HCT116 (cell line): ENCODE measurements at regions of chr2 and their contacts with region 1.

Region 1: GRCh38 chr2:84526562-84526961 is 10.3 kb downstream of the DNAH6 start:
- DNase-seq: no peak
- ATAC-seq: peak; percentile 20; the same call in 1 of the 2 replicates
- H3K4me3 ChIP-seq: no peak overlapping the region
- H3K27ac ChIP-seq: no peak overlapping the region
- H3K4me1 ChIP-seq: no peaks in the 10 kb centered on the region
- H3K27me3 ChIP-seq: no peaks in the 10 kb centered on the region
- CTCF ChIP-seq: peak; percentile 17 to 68 (median 48); a peak in 5 of 6 replicates
- POLR2A ChIP-seq: no peak
- RAD21 ChIP-seq: peak; percentile 66

Region 2: DNA sequence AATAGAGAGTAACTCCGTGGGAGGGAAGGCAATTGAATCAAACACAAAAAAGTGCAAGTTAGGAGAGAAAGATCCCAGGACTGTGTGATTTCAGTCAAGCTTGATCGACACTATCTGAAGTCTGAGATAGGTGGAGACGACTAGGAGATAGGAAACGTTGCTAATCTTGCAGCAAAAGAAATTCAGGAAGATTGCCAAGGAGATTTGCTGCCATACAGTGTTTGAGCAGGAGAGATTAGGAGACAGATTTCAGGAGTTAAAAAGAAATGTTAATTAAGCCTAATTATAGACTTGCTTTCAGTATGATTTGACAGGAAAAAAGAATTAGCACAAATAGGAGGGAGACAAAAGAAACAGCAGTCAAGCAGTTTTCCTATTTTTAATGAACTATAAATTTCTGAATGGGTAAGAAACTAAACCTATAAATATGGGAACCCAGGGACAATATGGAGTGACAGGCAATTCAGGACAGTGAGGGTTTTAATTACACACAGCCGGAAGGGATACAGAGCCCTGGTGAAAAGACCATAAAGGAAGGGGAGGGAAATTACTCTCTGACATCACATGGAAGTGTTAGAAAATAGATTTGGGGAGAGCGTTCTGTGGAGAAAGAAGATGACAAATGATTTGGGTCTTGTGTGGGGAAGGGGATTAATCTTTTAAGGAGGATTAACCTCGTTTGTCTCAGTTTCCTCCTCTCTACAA is 140.1 kb before region 1 on chr2:
- CTCF ChIA-PET with region 1: no interaction called
- POLR2A ChIA-PET with region 1: no interaction called
- RAD21 ChIA-PET with region 1: no interaction called
- intact Hi-C with region 1: no loop called
- DNase-seq: no peak
- ATAC-seq: no peak
- H3K4me3 ChIP-seq: no peak overlapping the region
- H3K27ac ChIP-seq: no peak overlapping the region
- H3K4me1 ChIP-seq: no peaks in the 10 kb centered on the region
- H3K27me3 ChIP-seq: no peaks in the 10 kb centered on the region
- CTCF ChIP-seq: no peak
- POLR2A ChIP-seq: no peak
- RAD21 ChIP-seq: no peak

Region 3: DNA sequence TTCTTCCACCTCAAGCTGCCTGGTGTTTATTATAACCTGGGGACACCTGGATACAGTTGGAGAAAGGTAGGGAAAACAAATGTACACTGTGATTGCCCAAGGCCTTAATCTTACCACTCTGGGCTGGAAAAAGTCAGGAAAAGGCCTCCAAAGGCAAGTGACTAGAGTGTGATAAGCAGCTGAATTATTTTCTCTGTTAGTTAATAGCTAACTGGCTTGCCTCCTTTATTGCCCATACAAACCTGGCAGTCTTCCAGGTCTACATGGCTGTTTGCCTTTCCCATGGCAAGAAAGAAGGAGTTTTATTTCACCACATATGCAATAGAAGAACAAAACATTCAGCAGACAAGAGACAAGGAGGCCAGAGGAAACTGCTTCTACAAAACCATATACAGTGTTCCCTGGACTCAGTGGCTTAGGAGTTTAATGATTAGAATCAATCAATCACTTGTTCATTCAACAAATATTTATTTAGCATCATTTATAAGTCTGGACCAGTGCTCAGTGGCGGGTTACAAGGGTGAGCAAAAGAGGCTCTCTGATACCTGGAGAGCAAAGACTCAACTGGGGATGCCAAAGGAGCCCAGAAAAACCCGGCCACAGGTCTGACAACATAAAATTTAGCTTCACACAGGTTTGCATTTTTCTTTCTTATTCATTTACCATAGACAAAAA is 40.0 kb before region 1 on chr2:
- CTCF ChIA-PET with region 1: no interaction called
- POLR2A ChIA-PET with region 1: no interaction called
- RAD21 ChIA-PET with region 1: no interaction called
- intact Hi-C with region 1: no loop called
- DNase-seq: no peak
- ATAC-seq: no peak
- H3K4me3 ChIP-seq: no peak overlapping the region
- H3K27ac ChIP-seq: no peak overlapping the region
- H3K4me1 ChIP-seq: no peaks in the 10 kb centered on the region; a peak in 1 of 4 replicates
- H3K27me3 ChIP-seq: no peaks in the 10 kb centered on the region
- CTCF ChIP-seq: no peak
- POLR2A ChIP-seq: no peak
- RAD21 ChIP-seq: no peak

Region 4: GRCh38 chr2:84537251-84537650 is 10.7 kb after region 1 on chr2:
- CTCF ChIA-PET with region 1: interaction called, 10 read pairs
- POLR2A ChIA-PET with region 1: no interaction called
- RAD21 ChIA-PET with region 1: no interaction called
- intact Hi-C with region 1: no loop called
- DNase-seq: no peak
- ATAC-seq: no peak
- H3K4me3 ChIP-seq: no peak overlapping the region
- H3K27ac ChIP-seq: no peak overlapping the region
- H3K4me1 ChIP-seq: no peaks in the 10 kb centered on the region
- H3K27me3 ChIP-seq: no peaks in the 10 kb centered on the region
- CTCF ChIP-seq: no peak
- POLR2A ChIP-seq: no peak
- RAD21 ChIP-seq: no peak